ENCODE measurements at regions of chr11 and their contacts with region 1.

Region 1: DNA sequence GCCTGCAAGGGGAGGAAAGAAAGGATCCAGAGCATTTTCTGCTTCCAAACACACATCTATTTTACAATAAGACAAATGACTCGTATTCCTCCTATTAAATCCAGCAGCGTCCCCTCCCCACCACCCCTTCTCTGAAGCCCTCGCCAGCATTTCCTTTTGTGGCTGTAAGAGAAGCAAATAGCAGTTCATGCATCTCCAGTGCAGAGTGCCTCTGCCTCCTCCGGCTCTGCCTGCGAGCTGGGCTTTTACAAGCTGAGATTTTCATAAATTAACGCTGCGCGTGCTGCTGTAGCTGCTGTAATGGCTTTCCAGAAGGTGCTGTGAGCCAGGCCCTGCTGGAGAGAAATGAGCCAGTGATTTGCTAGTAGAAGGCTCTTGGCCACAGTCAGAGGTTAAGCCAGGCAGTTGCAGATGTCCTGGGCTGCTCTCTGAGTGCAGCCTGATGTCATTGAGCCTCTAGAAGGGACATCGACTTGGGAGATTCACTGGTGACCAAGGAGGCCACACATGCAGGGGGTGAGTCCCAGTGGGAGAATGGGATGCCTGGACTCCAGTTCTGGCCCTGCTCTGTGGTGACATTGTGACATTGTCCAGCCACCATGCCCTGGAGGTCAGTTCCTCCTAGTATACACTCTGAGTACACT is 134.5 kb upstream of the NAV2 start:
- DNase-seq: no peak
- ATAC-seq: no peak
- H3K4me3 ChIP-seq: no peak overlapping the region
- H3K4me3 Mint-ChIP-seq: no peak overlapping the region
- H3K27ac ChIP-seq: no peak overlapping the region
- H3K27ac Mint-ChIP-seq: no peak overlapping the region
- H3K4me1 ChIP-seq: no peaks in the 10 kb centered on the region
- H3K4me1 Mint-ChIP-seq: no peaks in the 10 kb centered on the region
- H3K27me3 ChIP-seq: no peaks in the 10 kb centered on the region
- H3K27me3 Mint-ChIP-seq: no peaks in the 10 kb centered on the region
- CTCF ChIP-seq: no peak

Region 2: DNA sequence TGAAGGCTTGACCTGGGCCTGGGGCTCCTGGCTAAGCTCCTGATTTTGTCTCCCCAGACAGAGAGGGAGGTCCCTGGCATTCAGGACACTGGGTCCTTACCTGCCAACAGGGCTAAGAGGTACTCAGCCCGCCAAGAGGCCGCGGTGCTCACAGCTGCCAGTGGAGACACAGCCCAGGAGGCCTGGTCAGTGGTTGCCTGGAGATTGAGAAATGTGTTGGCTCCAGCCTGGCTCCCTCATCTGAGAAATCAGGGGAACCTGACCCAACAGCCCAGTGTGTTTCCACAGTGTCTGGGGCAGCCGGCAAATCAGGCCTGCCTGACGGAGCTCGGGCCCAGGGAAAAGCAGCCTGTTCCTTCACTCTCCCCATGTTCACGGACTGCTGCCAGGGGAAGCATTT is 55.2 kb after region 1 on chr11:
- CTCF ChIA-PET with region 1: no interaction called
- POLR2A ChIA-PET with region 1: no interaction called
- intact Hi-C with region 1: loop called in 1 of 2 experiments (anchors 10 kb)
- DNase-seq: no peak
- ATAC-seq: no peak
- H3K4me3 ChIP-seq: no peak overlapping the region
- H3K4me3 Mint-ChIP-seq: no peak overlapping the region
- H3K27ac ChIP-seq: no peak overlapping the region
- H3K27ac Mint-ChIP-seq: no peak overlapping the region
- H3K4me1 ChIP-seq: no peaks in the 10 kb centered on the region
- H3K4me1 Mint-ChIP-seq: no peaks in the 10 kb centered on the region
- H3K27me3 ChIP-seq: peaks cover 0 to 2% of the 10 kb centered on the region in 2 experiments
- H3K27me3 Mint-ChIP-seq: peaks cover 22% of the 10 kb centered on the region
- CTCF ChIP-seq: no peak

Measured in CD4-positive, alpha-beta T cell (primary cell).